ENCODE measurements at regions of chr4 and their contacts with region 1.

Region 1: GRCh38 chr4:20544645-20545044 is 155.6 kb upstream of the PACRGL start:
- DNase-seq: no peak

Region 2: DNA sequence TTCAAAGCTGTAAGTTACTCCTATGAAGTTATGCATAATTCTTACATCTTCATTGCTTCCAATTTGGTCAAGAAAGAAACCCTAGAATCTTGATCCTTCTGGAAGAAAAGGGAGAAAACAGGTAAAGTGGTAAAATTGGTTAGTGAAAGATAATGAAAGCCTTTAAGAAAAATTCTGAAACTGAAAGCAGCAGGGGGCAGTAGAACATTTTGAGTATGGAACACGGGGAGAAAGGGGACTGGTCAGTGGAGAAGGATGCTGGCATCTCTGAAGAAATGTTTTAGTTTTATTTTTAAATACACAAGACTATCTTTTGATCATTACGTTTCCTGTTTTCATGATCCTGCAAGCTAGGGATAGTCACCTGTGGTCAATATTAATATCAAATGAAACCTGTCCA is 238.7 kb before region 1 on chr4:
- intact Hi-C with region 1: loop called (anchors 5 kb)
- DNase-seq: peak in 1 of 10 donors; percentile 40

Region 3: GRCh38 chr4:20368926-20369325 is 175.7 kb before region 1 on chr4:
- intact Hi-C with region 1: no loop called
- DNase-seq: no peak

Region 4: GRCh38 chr4:20422398-20422797 is 122.2 kb before region 1 on chr4:
- intact Hi-C with region 1: loop called (anchors 10 kb)
- DNase-seq: peak in 2 of 10 donors; percentile 8 to 28

Region 5: DNA sequence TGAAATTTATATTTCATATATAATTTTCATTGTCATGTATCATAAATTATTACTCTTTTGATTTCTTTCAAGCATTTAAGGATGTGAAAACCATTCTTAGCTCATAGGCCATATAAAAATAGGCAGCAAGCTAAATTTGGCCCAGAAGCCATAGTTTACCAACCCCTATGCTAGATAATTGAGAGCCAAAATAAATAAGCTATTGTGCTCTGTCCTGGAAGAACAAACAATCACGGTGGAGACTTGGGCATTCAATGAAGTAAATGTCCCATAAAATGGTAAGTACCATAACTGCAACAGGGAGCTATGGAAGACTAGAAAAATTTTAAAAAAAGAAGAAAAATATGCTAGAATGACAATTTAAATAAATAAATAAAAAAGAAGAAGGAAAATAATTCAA is 94.7 kb after region 1 on chr4:
- intact Hi-C with region 1: no loop called
- DNase-seq: no peak